T-cell (primary cell): ENCODE measurements at regions of chr3 and their contacts with region 1.

Region 1: GRCh38 chr3:6697722-6698121 is 163.2 kb upstream of the GRM7 start:
- DNase-seq: no peak
- ATAC-seq: no peak
- H3K4me3 ChIP-seq: no peak overlapping the region
- H3K4me3 Mint-ChIP-seq: no peak overlapping the region
- H3K27ac ChIP-seq: no peak overlapping the region
- H3K27ac Mint-ChIP-seq: no peak overlapping the region
- H3K4me1 ChIP-seq: no peaks in the 10 kb centered on the region
- H3K4me1 Mint-ChIP-seq: no peaks in the 10 kb centered on the region
- H3K27me3 ChIP-seq: no peaks in the 10 kb centered on the region
- H3K27me3 Mint-ChIP-seq: no peaks in the 10 kb centered on the region

Region 2: GRCh38 chr3:6709158-6709557 is 11.4 kb after region 1 on chr3:
- CTCF ChIA-PET with region 1: interaction called, 5 to 10 read pairs
- POLR2A ChIA-PET with region 1: no interaction called
- DNase-seq: no peak
- ATAC-seq: no peak
- H3K4me3 ChIP-seq: no peak overlapping the region
- H3K4me3 Mint-ChIP-seq: no peak overlapping the region
- H3K27ac ChIP-seq: no peak overlapping the region
- H3K27ac Mint-ChIP-seq: no peak overlapping the region
- H3K4me1 ChIP-seq: no peaks in the 10 kb centered on the region
- H3K4me1 Mint-ChIP-seq: no peaks in the 10 kb centered on the region
- H3K27me3 ChIP-seq: no peaks in the 10 kb centered on the region
- H3K27me3 Mint-ChIP-seq: no peaks in the 10 kb centered on the region

Region 3: DNA sequence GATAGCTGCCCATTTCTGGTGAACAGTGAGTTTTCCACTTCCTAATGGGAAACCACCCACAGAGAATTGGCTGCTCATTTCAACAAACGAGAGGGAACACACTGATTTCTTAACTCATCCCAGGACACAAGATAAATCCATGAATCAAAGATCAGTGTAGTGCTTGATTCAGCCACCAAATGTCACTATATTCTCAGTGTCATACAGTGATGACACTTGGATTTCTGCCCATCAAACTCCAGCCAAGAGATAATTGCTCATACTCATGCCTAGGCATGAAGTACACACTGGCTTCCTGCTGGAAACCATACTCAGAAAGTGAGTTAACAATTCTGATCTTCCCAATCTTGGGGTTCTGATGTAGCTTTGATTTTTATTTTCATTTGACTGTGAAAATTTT is 127.8 kb after region 1 on chr3:
- CTCF ChIA-PET with region 1: no interaction called
- POLR2A ChIA-PET with region 1: no interaction called
- DNase-seq: no peak
- ATAC-seq: no peak
- H3K4me3 ChIP-seq: no peak overlapping the region
- H3K4me3 Mint-ChIP-seq: no peak overlapping the region
- H3K27ac ChIP-seq: no peak overlapping the region
- H3K27ac Mint-ChIP-seq: no peak overlapping the region
- H3K4me1 ChIP-seq: no peaks in the 10 kb centered on the region
- H3K4me1 Mint-ChIP-seq: no peaks in the 10 kb centered on the region
- H3K27me3 ChIP-seq: no peaks in the 10 kb centered on the region
- H3K27me3 Mint-ChIP-seq: no peaks in the 10 kb centered on the region